ENCODE measurements at regions of chr10 and their contacts with region 1.

Region 1: GRCh38 chr10:110304780-110305421 is at the start of gene SMNDC1:
- DNase-seq: peak; percentile 93
- ATAC-seq: peak; percentile 92
- H3K4me3 Mint-ChIP-seq: peak within 1 kb of the TSS; percentile 95
- H3K27ac Mint-ChIP-seq: peak within 1 kb of the TSS; percentile 99
- H3K4me1 Mint-ChIP-seq: peaks cover 54% of the 10 kb centered on the region
- H3K27me3 Mint-ChIP-seq: no peaks in the 10 kb centered on the region
- CTCF ChIP-seq: no peak
- total RNA-seq, gene SMNDC1: 32.7 and 35.6 TPM in 2 replicates

Region 2: DNA sequence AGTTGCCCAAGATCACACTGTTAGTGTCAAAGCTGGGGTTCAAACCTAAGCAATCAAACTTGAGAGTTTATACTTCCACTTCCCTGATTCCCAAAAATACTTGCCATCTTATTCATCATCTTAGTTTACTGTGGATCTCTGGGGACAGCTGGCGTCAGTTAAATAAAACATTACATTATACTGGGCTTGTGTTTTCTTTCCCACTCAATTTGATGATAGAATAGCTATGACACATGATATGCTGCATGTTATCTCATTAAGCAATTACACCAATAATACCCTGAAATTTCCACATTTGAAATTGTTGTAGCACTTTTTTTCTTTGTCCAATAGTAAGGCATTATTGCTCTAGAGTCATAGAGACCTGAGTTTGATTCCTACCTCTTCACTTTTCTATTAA is 160.4 kb before region 1 on chr10:
- CTCF ChIA-PET with region 1: no interaction called
- POLR2A ChIA-PET with region 1: no interaction called
- intact Hi-C with region 1: no loop called
- DNase-seq: no peak
- ATAC-seq: no peak
- H3K4me3 Mint-ChIP-seq: no peak overlapping the region
- H3K27ac Mint-ChIP-seq: no peak overlapping the region
- H3K4me1 Mint-ChIP-seq: peaks cover 7% of the 10 kb centered on the region
- H3K27me3 Mint-ChIP-seq: peaks cover 5% of the 10 kb centered on the region
- CTCF ChIP-seq: no peak

Region 3: DNA sequence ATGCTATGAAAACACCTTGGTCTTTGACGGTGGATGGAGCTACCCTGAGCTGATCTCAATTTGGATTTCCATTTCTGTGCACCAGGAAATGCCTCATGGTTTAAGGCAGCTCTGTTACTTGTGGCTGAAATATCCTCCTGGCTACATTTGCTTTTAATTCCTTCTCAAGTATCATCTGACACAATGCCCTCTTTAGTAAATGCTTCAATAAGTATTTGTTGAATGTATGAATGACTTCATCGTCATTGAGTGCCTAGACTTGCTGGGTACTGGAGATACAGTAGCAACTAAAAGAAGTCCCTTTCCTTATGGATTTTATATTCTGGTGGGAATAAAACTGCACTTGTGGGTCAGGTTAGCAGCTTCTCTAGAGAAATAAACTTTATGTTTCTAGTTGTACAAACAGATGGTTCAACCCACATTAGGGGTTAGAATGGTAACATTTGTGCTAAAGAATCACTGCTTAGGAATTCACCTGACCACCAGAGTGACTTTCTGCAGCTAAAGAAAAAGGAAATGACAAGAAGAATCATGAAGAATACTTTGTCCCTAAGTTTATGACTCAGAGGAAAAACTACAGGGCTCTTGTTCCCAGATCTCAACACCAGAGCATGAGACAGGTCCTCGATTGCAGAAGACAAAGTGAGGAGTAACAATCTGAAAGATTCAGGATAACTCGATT is 21.6 kb after region 1 on chr10:
- CTCF ChIA-PET with region 1: interaction called, 3 read pairs
- POLR2A ChIA-PET with region 1: interaction called, 14 read pairs
- intact Hi-C with region 1: no loop called
- DNase-seq: no peak
- ATAC-seq: peak; percentile 8
- H3K4me3 Mint-ChIP-seq: peak overlapping the region; percentile 4
- H3K27ac Mint-ChIP-seq: peak overlapping the region; percentile 92
- H3K4me1 Mint-ChIP-seq: peaks cover 49% of the 10 kb centered on the region
- H3K27me3 Mint-ChIP-seq: no peaks in the 10 kb centered on the region
- CTCF ChIP-seq: no peak

Region 4: GRCh38 chr10:110376021-110376766 is 71.3 kb after region 1 on chr10:
- CTCF ChIA-PET with region 1: no interaction called
- POLR2A ChIA-PET with region 1: no interaction called
- intact Hi-C with region 1: no loop called
- DNase-seq: no peak
- ATAC-seq: no peak
- H3K4me3 Mint-ChIP-seq: no peak overlapping the region
- H3K27ac Mint-ChIP-seq: no peak overlapping the region
- H3K4me1 Mint-ChIP-seq: peaks cover 25% of the 10 kb centered on the region
- H3K27me3 Mint-ChIP-seq: peaks cover 3% of the 10 kb centered on the region
- CTCF ChIP-seq: no peak

Region 5: DNA sequence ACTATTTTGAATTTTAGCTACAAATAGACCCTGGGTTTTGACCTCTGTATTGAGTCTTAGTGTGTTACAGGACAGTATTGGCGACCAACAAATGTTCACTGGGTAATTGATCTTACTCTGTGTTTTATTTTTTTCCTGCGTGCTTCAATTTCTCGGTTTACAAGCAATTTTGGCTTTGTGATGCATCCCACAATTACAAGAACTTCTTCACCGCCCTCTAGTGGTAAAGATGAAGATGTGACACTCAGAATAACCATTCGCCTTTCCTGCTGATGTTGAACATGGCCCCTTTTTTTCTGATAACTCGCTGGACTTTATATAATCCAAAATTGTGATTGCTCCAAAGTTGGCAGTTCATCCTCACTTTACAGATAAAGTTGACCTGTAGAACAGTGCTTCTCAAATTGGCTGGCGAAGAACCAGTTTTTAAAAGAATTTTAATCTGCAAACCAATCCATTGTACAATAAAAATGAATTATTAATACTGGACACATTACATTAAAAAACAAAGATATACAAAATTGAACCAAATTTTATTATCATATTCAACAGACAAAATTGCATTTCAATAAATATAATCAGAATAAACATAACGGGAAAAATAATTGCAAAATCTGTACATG is 242.3 kb after region 1 on chr10:
- CTCF ChIA-PET with region 1: interaction called, 59 read pairs
- POLR2A ChIA-PET with region 1: interaction called, 13 read pairs
- intact Hi-C with region 1: loop called (anchors 1 kb)
- DNase-seq: no peak
- ATAC-seq: peak; percentile 67
- H3K4me3 Mint-ChIP-seq: no peak overlapping the region
- H3K27ac Mint-ChIP-seq: no peak overlapping the region
- H3K4me1 Mint-ChIP-seq: peaks cover 6% of the 10 kb centered on the region
- H3K27me3 Mint-ChIP-seq: peaks cover 10% of the 10 kb centered on the region
- CTCF ChIP-seq: no peak

Region 6: DNA sequence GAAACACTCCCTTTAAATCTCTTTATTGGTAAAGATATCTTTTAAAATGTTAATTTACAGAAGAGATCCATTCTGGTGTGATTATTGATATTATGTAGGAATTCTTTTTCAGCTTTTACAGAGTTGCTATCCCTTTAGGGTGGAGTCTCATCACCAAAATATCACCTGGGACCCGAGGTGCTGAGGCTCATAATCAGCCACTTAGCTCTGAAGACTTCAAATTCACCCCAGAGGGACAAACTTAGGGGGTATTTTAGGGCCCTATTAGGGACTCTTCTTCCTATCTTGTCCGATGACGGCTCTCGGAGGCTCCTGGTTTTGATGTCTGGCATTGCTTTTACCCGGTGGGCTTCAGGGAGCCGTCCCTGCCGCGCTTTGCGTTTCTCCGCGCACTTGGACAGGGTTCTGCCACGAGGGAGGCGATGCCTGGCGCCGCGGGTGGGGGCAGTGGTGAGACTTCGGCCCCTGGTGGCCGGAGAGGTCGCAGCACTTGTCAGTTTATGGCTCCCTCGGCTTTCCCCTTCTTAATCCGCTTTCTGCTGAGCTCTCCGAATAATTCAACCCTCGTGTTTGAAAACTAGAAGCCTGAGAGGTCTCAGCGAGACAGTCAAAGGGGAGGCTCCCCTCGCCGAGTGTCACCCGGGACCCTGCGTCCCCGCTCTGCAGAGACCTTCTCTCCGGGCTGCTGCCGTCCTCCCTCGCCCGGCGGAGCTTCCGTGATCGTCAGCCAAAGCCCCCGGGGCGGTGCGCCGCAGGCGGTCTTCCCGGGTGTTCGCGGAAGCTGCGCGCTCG is 367.1 kb after region 1 on chr10:
- CTCF ChIA-PET with region 1: interaction called, 4 read pairs
- POLR2A ChIA-PET with region 1: interaction called, 6 read pairs
- intact Hi-C with region 1: loop called (anchors 5 kb)
- DNase-seq: peak; percentile 72
- ATAC-seq: peak; percentile 97
- H3K4me3 Mint-ChIP-seq: peak overlapping the region; percentile 90
- H3K27ac Mint-ChIP-seq: peak overlapping the region; percentile 88
- H3K4me1 Mint-ChIP-seq: peaks cover 4% of the 10 kb centered on the region
- H3K27me3 Mint-ChIP-seq: peaks cover 17% of the 10 kb centered on the region
- CTCF ChIP-seq: peak; percentile 52

Region 7: GRCh38 chr10:110893559-110894179 is 588.8 kb after region 1 on chr10:
- CTCF ChIA-PET with region 1: no interaction called
- POLR2A ChIA-PET with region 1: no interaction called
- intact Hi-C with region 1: loop called (anchors 5 kb)
- DNase-seq: no peak
- ATAC-seq: peak; percentile 93
- H3K4me3 Mint-ChIP-seq: no peak overlapping the region
- H3K27ac Mint-ChIP-seq: no peak overlapping the region
- H3K4me1 Mint-ChIP-seq: peaks cover 22% of the 10 kb centered on the region
- H3K27me3 Mint-ChIP-seq: no peaks in the 10 kb centered on the region
- CTCF ChIP-seq: no peak